H1 (cell line): ENCODE measurements at regions of chr1 and their contacts with region 1.

Region 1: DNA sequence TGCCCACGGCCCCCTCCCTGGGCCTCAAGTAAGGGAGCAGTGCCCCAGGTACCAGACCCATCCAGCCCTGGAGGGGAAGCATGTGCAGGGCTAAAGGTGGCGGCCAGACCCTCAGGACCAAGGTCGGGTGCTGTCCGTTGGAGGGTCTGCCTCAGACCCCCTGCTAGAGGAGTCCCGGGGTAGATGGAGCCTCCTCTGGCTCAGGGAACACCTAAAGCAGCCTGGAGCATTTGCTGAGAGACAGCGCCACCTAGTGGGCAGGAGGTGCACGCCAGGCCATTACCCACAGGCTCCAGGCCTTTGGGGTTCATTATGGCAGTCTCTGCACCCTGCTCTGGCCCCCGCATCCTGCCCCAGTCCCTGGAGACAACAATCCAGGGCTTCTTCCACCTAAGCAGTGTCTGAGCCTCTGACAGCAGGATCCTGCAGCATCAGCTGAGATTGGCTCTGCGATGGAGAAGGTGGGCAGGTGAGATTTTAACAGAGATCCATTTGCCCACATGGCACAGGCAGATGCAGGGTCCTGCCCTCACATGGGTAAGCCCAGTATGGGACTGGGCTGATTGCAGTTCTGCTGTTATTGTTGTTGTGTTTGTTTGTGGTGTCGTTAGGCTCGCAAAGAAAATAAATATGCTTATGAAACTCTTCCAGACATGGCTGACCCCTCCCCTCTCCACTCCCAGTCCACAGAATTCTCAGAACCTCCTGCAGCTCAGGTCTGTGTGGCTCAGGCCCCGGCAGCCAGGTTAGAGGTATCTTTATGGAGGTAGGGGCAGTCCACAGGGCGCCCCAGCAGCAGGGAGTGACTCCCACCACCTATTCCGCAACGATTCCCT is 42.4 kb downstream of the CTNNBIP1 start:
- DNase-seq: peak; percentile 56 to 99
- H3K4me3 ChIP-seq: no peak overlapping the region
- H3K27ac ChIP-seq: no peak overlapping the region
- H3K4me1 ChIP-seq: no peaks in the 10 kb centered on the region; a peak in 2 of 7 replicates
- H3K27me3 ChIP-seq: no peaks in the 10 kb centered on the region
- CTCF ChIP-seq: peak; percentile 97 to 100 (median 99)
- EP300 ChIP-seq: no peak
- POLR2A ChIP-seq: no peak
- RAD21 ChIP-seq: peak; percentile 99

Region 2: GRCh38 chr1:9784508-9785133 is 83.0 kb before region 1 on chr1:
- CTCF ChIA-PET with region 1: interaction called, 312 read pairs
- POLR2A ChIA-PET with region 1: interaction called, 3 read pairs
- DNase-seq: no peak
- H3K4me3 ChIP-seq: no peak overlapping the region
- H3K27ac ChIP-seq: no peak overlapping the region
- H3K4me1 ChIP-seq: peaks cover 0 to 5% (median 1%) of the 10 kb centered on the region in 4 experiments; a peak in 3 of 7 replicates
- H3K27me3 ChIP-seq: no peaks in the 10 kb centered on the region
- CTCF ChIP-seq: peak in 2 of 3 experiments; percentile 76 to 79; a peak in 3 of 4 replicates
- EP300 ChIP-seq: no peak
- POLR2A ChIP-seq: no peak
- RAD21 ChIP-seq: peak; percentile 86 to 89

Region 3: DNA sequence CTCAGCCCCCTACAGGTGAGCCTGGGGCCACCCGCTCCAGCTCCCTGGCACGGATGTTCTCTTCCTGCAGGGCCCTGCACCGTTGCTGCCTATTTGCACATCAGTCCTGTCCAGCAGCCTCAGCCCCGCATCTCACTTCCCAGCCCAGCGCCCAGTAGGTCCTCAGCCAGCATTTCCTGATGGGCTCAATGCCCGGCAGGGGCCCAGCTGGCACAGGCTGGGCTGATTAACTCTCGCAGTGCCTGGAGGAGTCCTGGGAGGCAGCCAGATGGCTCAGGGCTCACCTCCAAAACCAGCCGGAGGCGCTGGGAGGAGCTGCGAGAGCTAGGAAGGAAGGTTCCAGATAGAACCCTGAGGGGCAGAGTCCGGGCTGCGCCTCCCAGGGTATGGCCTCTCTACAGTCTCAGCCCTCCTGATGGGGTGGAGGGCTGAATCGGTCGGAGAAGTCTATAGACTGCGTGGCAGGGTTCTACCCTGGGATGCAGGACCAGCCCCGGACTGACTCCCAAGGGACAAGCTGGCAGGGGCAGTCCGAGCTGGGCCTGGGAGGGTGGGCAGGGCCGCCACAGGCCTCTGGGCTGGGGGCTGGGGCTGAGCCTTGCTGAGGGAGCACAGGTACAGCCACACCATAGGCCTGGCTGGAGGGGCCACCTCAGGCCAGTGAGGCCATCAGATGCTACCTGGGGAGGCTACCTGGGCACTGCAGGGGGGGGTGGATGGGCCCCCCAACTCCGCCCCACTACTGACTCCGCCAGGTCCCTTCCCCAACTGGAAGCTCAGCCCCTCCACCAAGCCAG is 24.6 kb before region 1 on chr1:
- CTCF ChIA-PET with region 1: interaction called, 63 read pairs
- POLR2A ChIA-PET with region 1: no interaction called
- DNase-seq: no peak
- H3K4me3 ChIP-seq: no peak overlapping the region
- H3K27ac ChIP-seq: no peak overlapping the region
- H3K4me1 ChIP-seq: peaks cover 0 to 22% (median 16%) of the 10 kb centered on the region in 4 experiments; a peak in 6 of 7 replicates
- H3K27me3 ChIP-seq: no peaks in the 10 kb centered on the region
- CTCF ChIP-seq: peak in 1 of 3 experiments; percentile 32; a peak in 1 of 4 replicates
- EP300 ChIP-seq: no peak
- POLR2A ChIP-seq: no peak
- RAD21 ChIP-seq: no peak

Region 4: GRCh38 chr1:9882296-9882944 is 14.8 kb after region 1 on chr1:
- CTCF ChIA-PET with region 1: interaction called, 31 read pairs
- POLR2A ChIA-PET with region 1: no interaction called
- DNase-seq: no peak
- H3K4me3 ChIP-seq: no peak overlapping the region
- H3K27ac ChIP-seq: no peak overlapping the region
- H3K4me1 ChIP-seq: peaks cover 0 to 7% (median 2%) of the 10 kb centered on the region in 4 experiments; a peak in 1 of 7 replicates
- H3K27me3 ChIP-seq: no peaks in the 10 kb centered on the region
- CTCF ChIP-seq: no peak
- EP300 ChIP-seq: no peak
- POLR2A ChIP-seq: no peak
- RAD21 ChIP-seq: no peak

Region 5: GRCh38 chr1:9985001-9985400 is 117.4 kb after region 1 on chr1:
- CTCF ChIA-PET with region 1: no interaction called
- POLR2A ChIA-PET with region 1: no interaction called
- DNase-seq: no peak
- H3K4me3 ChIP-seq: no peak overlapping the region
- H3K27ac ChIP-seq: no peak overlapping the region
- H3K4me1 ChIP-seq: no peaks in the 10 kb centered on the region
- H3K27me3 ChIP-seq: no peaks in the 10 kb centered on the region
- CTCF ChIP-seq: no peak
- EP300 ChIP-seq: no peak
- POLR2A ChIP-seq: no peak
- RAD21 ChIP-seq: no peak